GM10248 (cell line): ENCODE measurements at regions of chr17 and their contacts with region 1.

Region 1: GRCh38 chr17:27630607-27631410 is at the start of gene LGALS9:
- DNase-seq: peak; percentile 70
- CTCF ChIP-seq: no peak

Region 2: GRCh38 chr17:27569257-27569722 is 61.5 kb before region 1 on chr17:
- CTCF ChIA-PET with region 1: no interaction called
- POLR2A ChIA-PET with region 1: no interaction called
- DNase-seq: peak; percentile 74
- CTCF ChIP-seq: peak; percentile 72

Region 3: DNA sequence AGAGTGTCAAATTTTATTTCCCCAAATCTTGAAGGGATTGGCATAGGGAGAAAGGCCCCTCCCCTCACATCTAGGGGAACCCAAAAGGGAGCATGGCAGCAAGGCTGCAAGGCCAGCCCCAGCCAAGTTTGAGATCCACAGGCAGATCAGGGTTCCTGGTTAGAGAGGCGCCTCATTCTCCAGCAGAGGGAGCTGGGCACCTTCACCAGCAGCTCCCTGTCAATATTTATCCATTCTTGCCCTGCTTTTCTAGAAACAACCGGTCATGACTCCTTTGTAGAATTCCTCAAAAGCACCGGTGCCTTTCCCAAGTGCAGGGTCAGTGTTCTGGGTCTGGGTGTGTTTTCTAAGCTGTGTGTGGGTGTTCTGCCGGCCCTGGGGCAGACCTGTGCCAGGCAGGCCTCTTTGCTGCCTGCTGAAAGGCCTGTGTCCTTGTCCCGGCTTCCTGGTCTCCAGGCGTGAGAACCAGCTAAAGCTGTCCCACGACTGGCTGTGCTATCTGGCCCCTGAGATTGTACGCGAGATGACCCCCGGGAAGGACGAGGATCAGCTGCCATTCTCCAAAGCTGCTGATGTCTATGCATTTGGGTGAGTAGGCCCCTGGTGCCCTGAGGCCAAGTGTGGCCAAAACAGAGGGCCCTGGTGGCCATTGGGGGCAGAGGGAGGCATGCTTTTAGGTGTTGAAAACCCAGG is 21.1 kb before region 1 on chr17:
- CTCF ChIA-PET with region 1: interaction called, 75 read pairs
- POLR2A ChIA-PET with region 1: no interaction called
- DNase-seq: no peak
- CTCF ChIP-seq: peak; percentile 43